ENCODE measurements at regions of chr9 and their contacts with region 1.

Region 1: GRCh38 chr9:128275996-128276573 is at the starts of genes GOLGA2 and SWI5:
- DNase-seq: peak; percentile 100
- H3K4me3 Mint-ChIP-seq: peak within 1 kb of the TSS; percentile 98
- H3K27ac Mint-ChIP-seq: peak within 1 kb of the TSS; percentile 91
- H3K4me1 Mint-ChIP-seq: peaks cover 54% of the 10 kb centered on the region
- H3K27me3 Mint-ChIP-seq: no peaks in the 10 kb centered on the region
- total RNA-seq, gene GOLGA2: 52.3 and 53.0 TPM in 2 replicates
- total RNA-seq, gene SWI5: 10.4 and 13.3 TPM in 2 replicates

Region 2: GRCh38 chr9:128159784-128160602 is 116.1 kb before region 1 on chr9 and contains the start of gene BBLN:
- intact Hi-C with region 1: loop called (anchors 1 kb)
- DNase-seq: peak; percentile 88
- H3K4me3 Mint-ChIP-seq: peak within 1 kb of the TSS; percentile 84
- H3K27ac Mint-ChIP-seq: peak within 1 kb of the TSS; percentile 93
- H3K4me1 Mint-ChIP-seq: peaks cover 14% of the 10 kb centered on the region
- H3K27me3 Mint-ChIP-seq: peaks cover 2% of the 10 kb centered on the region
- total RNA-seq, gene BBLN: 97.3 and 106 TPM in 2 replicates

Region 3: GRCh38 chr9:128249908-128250838 is 25.9 kb before region 1 on chr9:
- intact Hi-C with region 1: loop called (anchors 1 kb)
- DNase-seq: peak; percentile 94
- H3K4me3 Mint-ChIP-seq: peak overlapping the region; percentile 78
- H3K27ac Mint-ChIP-seq: no peak overlapping the region
- H3K4me1 Mint-ChIP-seq: peaks cover 5% of the 10 kb centered on the region
- H3K27me3 Mint-ChIP-seq: peaks cover 28% of the 10 kb centered on the region

Region 4: GRCh38 chr9:128370826-128371621 is 94.9 kb after region 1 on chr9 and contains the start of gene URM1:
- intact Hi-C with region 1: loop called (anchors 1 kb)
- DNase-seq: peak; percentile 96
- H3K4me3 Mint-ChIP-seq: peak within 1 kb of the TSS; percentile 96
- H3K27ac Mint-ChIP-seq: peak within 1 kb of the TSS; percentile 94
- H3K4me1 Mint-ChIP-seq: peaks cover 33% of the 10 kb centered on the region
- H3K27me3 Mint-ChIP-seq: no peaks in the 10 kb centered on the region
- total RNA-seq, gene URM1: 81.6 and 82.6 TPM in 2 replicates

Region 5: GRCh38 chr9:128504485-128505413 is 228.7 kb after region 1 on chr9 and contains the start of gene GLE1:
- intact Hi-C with region 1: loop called (anchors 1 kb)
- DNase-seq: peak; percentile 97
- H3K4me3 Mint-ChIP-seq: peak within 1 kb of the TSS; percentile 99
- H3K27ac Mint-ChIP-seq: peak within 1 kb of the TSS; percentile 99
- H3K4me1 Mint-ChIP-seq: peaks cover 23% of the 10 kb centered on the region
- H3K27me3 Mint-ChIP-seq: no peaks in the 10 kb centered on the region
- total RNA-seq, gene GLE1: 51.4 and 52.0 TPM in 2 replicates

Measured in activated T-helper 1 cell treated with anti-CD3 and anti-CD28 coated beads, Interleukin-12 subunit alpha, Interleukin-12 subunit beta, Interleukin-2, Interleukin-4 antibody, amounts not matched to agents 30 ng/mL and 10 ng/mL and 1 ng/mL, durations not matched to agents 14 hours and 24 hours and 36 hours (primary cell).